IMR-90 (cell line): ENCODE measurements at regions of chr1 and their contacts with region 1.

Region 1: GRCh38 chr1:153510984-153511410 is 24.8 kb downstream of the S100A6 start:
- DNase-seq: peak; percentile 74
- ATAC-seq: peak; percentile 69
- H3K4me3 ChIP-seq: no peak overlapping the region
- H3K27ac ChIP-seq: no peak overlapping the region
- H3K4me1 ChIP-seq: peaks cover 19% of the 10 kb centered on the region
- H3K27me3 ChIP-seq: no peaks in the 10 kb centered on the region
- CTCF ChIP-seq: peak; percentile 97
- POLR2A ChIP-seq: 0 out of 2 replicates have a peak, but pooled peaks have one; percentile 33
- RAD21 ChIP-seq: peak; percentile 97

Region 2: GRCh38 chr1:153532769-153533599 is 22.0 kb after region 1 on chr1:
- CTCF ChIA-PET with region 1: interaction called, 13 read pairs
- POLR2A ChIA-PET with region 1: no interaction called
- dilution Hi-C with region 1: no loop called
- in situ Hi-C with region 1: no loop called
- intact Hi-C with region 1: loop called (anchors 1 kb)
- DNase-seq: peak; percentile 84
- ATAC-seq: peak; percentile 49
- H3K4me3 ChIP-seq: peak overlapping the region; percentile 8
- H3K27ac ChIP-seq: peak overlapping the region; percentile 91
- H3K4me1 ChIP-seq: peaks cover 25% of the 10 kb centered on the region
- H3K27me3 ChIP-seq: no peaks in the 10 kb centered on the region
- CTCF ChIP-seq: peak; percentile 94
- POLR2A ChIP-seq: peak; percentile 51
- RAD21 ChIP-seq: peak; percentile 87

Region 3: GRCh38 chr1:153545067-153546055 is 34.4 kb after region 1 on chr1 and contains the start of gene S100A4:
- CTCF ChIA-PET with region 1: no interaction called
- POLR2A ChIA-PET with region 1: no interaction called
- dilution Hi-C with region 1: no loop called
- in situ Hi-C with region 1: no loop called
- intact Hi-C with region 1: no loop called
- DNase-seq: peak; percentile 83
- ATAC-seq: peak; percentile 79
- H3K4me3 ChIP-seq: no peak within 1 kb of the TSS
- H3K27ac ChIP-seq: peak within 1 kb of the TSS; percentile 81
- H3K4me1 ChIP-seq: peaks cover 40% of the 10 kb centered on the region
- H3K27me3 ChIP-seq: no peaks in the 10 kb centered on the region
- CTCF ChIP-seq: no peak
- POLR2A ChIP-seq: no peak
- RAD21 ChIP-seq: no peak
- total RNA-seq, gene S100A4: 5.6 and 7.5 TPM in 2 replicates

Region 4: GRCh38 chr1:153626922-153627796 is 116.2 kb after region 1 on chr1 and contains the start of gene S100A13:
- CTCF ChIA-PET with region 1: interaction called, 7 read pairs
- POLR2A ChIA-PET with region 1: no interaction called
- dilution Hi-C with region 1: no loop called
- in situ Hi-C with region 1: no loop called
- intact Hi-C with region 1: loop called (anchors 1 kb)
- DNase-seq: peak; percentile 96
- ATAC-seq: peak; percentile 87
- H3K4me3 ChIP-seq: peak within 1 kb of the TSS; percentile 54
- H3K27ac ChIP-seq: peak within 1 kb of the TSS; percentile 96
- H3K4me1 ChIP-seq: peaks cover 14% of the 10 kb centered on the region
- H3K27me3 ChIP-seq: no peaks in the 10 kb centered on the region
- CTCF ChIP-seq: peak; percentile 60
- POLR2A ChIP-seq: peak; percentile 99
- RAD21 ChIP-seq: peak; percentile 42
- total RNA-seq, gene S100A13: 122 and 225 TPM in 2 replicates

Region 5: DNA sequence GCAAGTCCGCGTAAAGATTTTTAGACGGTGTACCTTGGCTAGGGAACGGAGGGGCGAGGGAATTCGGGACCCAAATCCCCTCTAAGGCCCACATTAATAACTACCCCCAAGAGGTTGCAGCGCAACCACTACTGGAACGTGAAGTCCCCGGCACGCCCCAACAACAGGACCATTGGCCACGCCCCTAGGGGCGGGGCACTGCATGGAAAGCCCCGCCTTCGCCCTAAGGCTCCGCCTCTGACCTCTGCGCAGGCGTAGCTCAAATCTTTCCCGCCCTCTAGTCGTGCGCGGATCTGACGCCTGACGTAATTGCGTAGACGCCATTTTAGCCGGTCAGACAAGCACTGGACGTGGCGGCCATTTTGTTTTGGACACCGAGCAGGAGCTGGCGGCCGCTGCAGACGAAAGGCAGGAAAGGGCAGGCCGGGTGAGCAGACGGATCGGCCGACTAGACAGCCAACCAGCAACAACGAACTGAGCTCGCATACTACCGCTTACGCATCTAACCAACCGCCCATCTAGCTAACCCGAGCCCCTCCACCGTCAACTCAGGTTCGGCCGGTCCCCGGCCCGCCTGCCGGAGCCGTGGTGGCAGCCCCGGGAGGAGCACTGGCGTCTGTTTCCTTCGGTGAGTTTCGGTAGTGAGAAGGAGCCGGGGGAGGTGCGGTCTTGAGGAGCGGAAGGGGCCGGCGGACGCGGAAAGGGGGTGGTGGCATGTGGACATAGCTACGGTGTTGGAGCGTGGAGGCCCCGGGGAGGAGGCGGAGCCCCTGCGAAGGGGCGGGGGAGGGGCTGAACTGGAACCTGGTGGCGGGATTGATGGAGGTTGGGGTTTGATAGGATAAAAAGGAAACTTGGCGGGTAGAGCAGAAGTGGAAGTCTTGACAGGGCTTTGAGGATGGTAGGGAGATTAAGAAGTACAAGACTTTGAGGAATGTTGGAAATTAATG is 123.0 kb after region 1 on chr1 and contains the start of gene CHTOP:
- CTCF ChIA-PET with region 1: interaction called, 11 read pairs
- POLR2A ChIA-PET with region 1: no interaction called
- dilution Hi-C with region 1: no loop called
- in situ Hi-C with region 1: no loop called
- intact Hi-C with region 1: loop called (anchors 1 kb)
- DNase-seq: peak; percentile 99
- ATAC-seq: peak; percentile 97
- H3K4me3 ChIP-seq: peak within 1 kb of the TSS; percentile 79
- H3K27ac ChIP-seq: peak within 1 kb of the TSS; percentile 98
- H3K4me1 ChIP-seq: peaks cover 3% of the 10 kb centered on the region
- H3K27me3 ChIP-seq: no peaks in the 10 kb centered on the region
- CTCF ChIP-seq: no peak
- POLR2A ChIP-seq: peak; percentile 94
- RAD21 ChIP-seq: no peak; the same call in 1 of the 2 replicates
- total RNA-seq, gene CHTOP: 33.9 and 38.9 TPM in 2 replicates

Region 6: GRCh38 chr1:153649863-153650235 is 138.9 kb after region 1 on chr1:
- CTCF ChIA-PET with region 1: interaction called, 5 read pairs
- POLR2A ChIA-PET with region 1: no interaction called
- dilution Hi-C with region 1: no loop called
- in situ Hi-C with region 1: loop called (anchors 10 kb)
- intact Hi-C with region 1: no loop called
- DNase-seq: no peak
- ATAC-seq: no peak
- H3K4me3 ChIP-seq: no peak overlapping the region
- H3K27ac ChIP-seq: no peak overlapping the region
- H3K4me1 ChIP-seq: peaks cover 7% of the 10 kb centered on the region
- H3K27me3 ChIP-seq: no peaks in the 10 kb centered on the region
- CTCF ChIP-seq: no peak
- POLR2A ChIP-seq: no peak
- RAD21 ChIP-seq: no peak

Region 7: GRCh38 chr1:153670859-153671627 is 160.0 kb after region 1 on chr1 and contains the start of gene ILF2:
- CTCF ChIA-PET with region 1: no interaction called
- POLR2A ChIA-PET with region 1: no interaction called
- dilution Hi-C with region 1: no loop called
- in situ Hi-C with region 1: no loop called
- intact Hi-C with region 1: loop called (anchors 2 kb)
- DNase-seq: peak; percentile 100
- ATAC-seq: peak; percentile 93
- H3K4me3 ChIP-seq: peak within 1 kb of the TSS; percentile 65
- H3K27ac ChIP-seq: peak within 1 kb of the TSS; percentile 61
- H3K4me1 ChIP-seq: peaks cover 1% of the 10 kb centered on the region; the same call in 1 of the 2 replicates
- H3K27me3 ChIP-seq: no peaks in the 10 kb centered on the region
- CTCF ChIP-seq: peak; percentile 37
- POLR2A ChIP-seq: peak; percentile 97
- RAD21 ChIP-seq: no peak
- total RNA-seq, gene ILF2: 405 and 504 TPM in 2 replicates

Region 8: GRCh38 chr1:153749408-153750005 is 238.5 kb after region 1 on chr1:
- CTCF ChIA-PET with region 1: interaction called, 3 read pairs
- POLR2A ChIA-PET with region 1: no interaction called
- dilution Hi-C with region 1: no loop called
- in situ Hi-C with region 1: loop called (anchors 5 kb)
- intact Hi-C with region 1: loop called (anchors 1 kb)
- DNase-seq: peak; percentile 80
- ATAC-seq: peak; percentile 100
- H3K4me3 ChIP-seq: no peak overlapping the region
- H3K27ac ChIP-seq: no peak overlapping the region
- H3K4me1 ChIP-seq: peaks cover 2% of the 10 kb centered on the region
- H3K27me3 ChIP-seq: no peaks in the 10 kb centered on the region
- CTCF ChIP-seq: peak; percentile 97
- POLR2A ChIP-seq: no peak
- RAD21 ChIP-seq: peak; percentile 91